Ascending aorta (tissue), 2 donors: ENCODE measurements at regions of chr17 and their contacts with region 1.

Region 1: DNA sequence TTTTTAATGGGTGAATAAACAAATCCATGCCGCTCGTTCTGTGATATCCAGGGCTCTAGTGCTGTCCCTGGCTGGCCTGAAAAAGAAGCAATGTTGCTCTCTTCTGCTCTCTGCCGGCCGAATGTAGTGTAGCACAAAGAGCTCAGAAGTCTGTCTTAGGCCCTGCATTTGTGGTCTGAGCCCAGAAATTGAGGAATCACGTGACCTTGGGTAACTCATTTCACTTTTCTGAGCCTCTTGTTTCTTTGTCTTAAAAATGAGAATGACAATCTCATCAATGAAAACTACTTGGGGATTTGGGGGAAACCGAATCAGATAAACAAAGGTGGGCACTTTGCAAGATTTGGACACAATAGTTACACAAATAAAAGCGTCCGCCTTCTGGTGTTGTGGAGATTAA is 381.6 kb upstream of the ASIC2 start:
- DNase-seq: no peak
- H3K4me3 ChIP-seq: no peak overlapping the region
- H3K27ac ChIP-seq: no peak overlapping the region
- H3K4me1 ChIP-seq: no peaks in the 10 kb centered on the region
- H3K27me3 ChIP-seq: no peaks in the 10 kb centered on the region
- CTCF ChIP-seq: peak; percentile 48 to 80 (median 66)

Region 2: DNA sequence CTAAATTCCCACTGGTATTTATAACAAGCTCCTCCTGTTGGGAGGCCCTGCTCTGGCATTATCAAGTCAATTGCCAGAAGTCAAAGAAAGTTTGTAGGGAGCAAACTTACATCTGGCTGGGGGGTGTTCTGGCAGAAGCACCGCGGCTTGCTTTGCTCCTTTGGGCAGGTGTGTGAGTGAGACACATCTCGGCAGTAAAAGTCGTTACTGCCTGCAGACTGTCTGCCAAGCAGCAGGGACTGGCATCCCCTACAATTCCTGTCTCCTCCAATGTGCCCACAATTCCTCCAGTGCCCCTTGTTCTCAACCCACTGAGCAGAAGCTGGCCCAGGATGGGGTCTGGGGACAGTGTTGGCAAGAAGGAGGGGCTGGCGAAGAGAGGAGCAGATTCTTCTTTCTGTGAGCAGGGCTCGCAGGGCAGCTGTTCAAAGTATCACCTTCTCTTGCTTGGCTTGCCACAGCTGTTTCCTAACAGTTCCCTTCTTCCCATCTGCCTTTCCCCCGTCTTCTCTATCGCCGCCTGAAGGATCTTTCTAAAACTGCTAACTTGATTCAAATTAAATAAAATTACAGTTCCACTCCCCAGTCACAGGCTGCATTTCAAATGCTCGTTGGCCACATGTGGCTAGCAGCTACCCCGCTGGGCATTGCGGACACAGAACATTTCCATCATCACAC is 652.8 kb before region 1 on chr17:
- intact Hi-C with region 1: loop called (anchors 10 kb)
- DNase-seq: no peak
- H3K4me3 ChIP-seq: no peak overlapping the region
- H3K27ac ChIP-seq: no peak overlapping the region
- H3K4me1 ChIP-seq: no peaks in the 10 kb centered on the region
- H3K27me3 ChIP-seq: no peaks in the 10 kb centered on the region
- CTCF ChIP-seq: no peak

Region 3: GRCh38 chr17:33520426-33521330 is 154.0 kb before region 1 on chr17:
- intact Hi-C with region 1: loop called (anchors 10 kb)
- DNase-seq: no peak
- H3K4me3 ChIP-seq: no peak overlapping the region
- H3K27ac ChIP-seq: no peak overlapping the region
- H3K4me1 ChIP-seq: no peaks in the 10 kb centered on the region
- H3K27me3 ChIP-seq: no peaks in the 10 kb centered on the region
- CTCF ChIP-seq: peak; percentile 28 to 57 (median 38)

Region 4: DNA sequence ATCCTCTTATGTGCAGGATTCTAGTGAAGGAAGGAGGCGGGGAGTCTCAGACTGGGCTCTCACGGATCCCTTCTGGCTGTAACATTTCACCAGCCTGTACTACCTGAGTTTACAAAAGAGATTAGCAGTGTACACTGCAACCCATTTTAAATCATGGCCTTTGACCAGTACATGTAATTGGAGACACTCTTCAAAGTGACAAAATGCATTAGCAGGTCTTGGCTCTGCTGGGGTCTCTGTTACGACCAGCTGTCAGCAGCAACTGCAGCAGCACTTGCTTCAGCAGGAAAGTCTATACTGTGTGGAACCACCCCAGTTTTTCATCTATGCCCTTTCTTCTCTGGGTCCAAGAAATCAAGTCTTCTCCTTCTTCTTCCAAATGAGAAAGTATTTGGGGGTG is 58.8 kb before region 1 on chr17:
- intact Hi-C with region 1: loop called (anchors 10 kb)
- DNase-seq: no peak
- H3K4me3 ChIP-seq: no peak overlapping the region
- H3K27ac ChIP-seq: no peak overlapping the region
- H3K4me1 ChIP-seq: no peaks in the 10 kb centered on the region
- H3K27me3 ChIP-seq: no peaks in the 10 kb centered on the region
- CTCF ChIP-seq: no peak